ENCODE measurements at regions of chr4 and their contacts with region 1.

Region 1: DNA sequence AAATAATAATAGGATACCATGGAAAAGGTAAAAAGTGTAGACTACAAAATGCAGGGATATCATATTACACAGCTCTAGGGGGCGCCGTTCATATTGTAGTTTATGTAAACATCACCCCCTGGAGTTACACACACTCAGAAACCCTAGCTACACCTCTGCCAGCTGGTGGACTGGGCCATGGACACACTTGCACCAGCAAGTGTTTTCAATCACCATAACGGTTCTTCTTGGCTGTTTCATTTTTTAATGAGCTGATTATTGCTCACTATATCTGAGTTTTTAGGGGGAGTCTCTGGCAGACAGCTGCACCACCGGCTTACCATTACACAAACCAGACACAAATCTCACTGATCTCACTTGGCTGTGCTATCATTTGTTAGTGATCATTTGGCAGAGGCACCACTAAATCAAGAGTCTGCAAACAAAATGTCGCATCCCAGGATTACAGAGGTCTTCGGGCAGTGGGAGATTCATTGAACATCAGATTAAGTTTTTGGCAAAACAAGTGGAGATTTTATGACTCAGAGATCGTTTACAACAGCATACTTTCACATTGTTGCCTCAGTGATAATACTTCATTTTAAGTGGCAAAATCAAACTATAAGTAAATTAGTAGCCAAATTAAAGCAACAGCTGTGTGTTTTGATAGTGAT is 185.7 kb downstream of the UNC5C start:
- DNase-seq: peak in 1 of 10 donors; percentile 54
- H3K4me3 ChIP-seq: peak overlapping the region in 47 of 59 donors; percentile 0 to 58 (median 26)
- H3K27ac ChIP-seq: peak overlapping the region; percentile 29 to 90 (median 81)
- H3K27me3 ChIP-seq: no peaks in the 10 kb centered on the region
- CTCF ChIP-seq: peak in 49 of 56 donors; percentile 15 to 66 (median 43)

Region 2: DNA sequence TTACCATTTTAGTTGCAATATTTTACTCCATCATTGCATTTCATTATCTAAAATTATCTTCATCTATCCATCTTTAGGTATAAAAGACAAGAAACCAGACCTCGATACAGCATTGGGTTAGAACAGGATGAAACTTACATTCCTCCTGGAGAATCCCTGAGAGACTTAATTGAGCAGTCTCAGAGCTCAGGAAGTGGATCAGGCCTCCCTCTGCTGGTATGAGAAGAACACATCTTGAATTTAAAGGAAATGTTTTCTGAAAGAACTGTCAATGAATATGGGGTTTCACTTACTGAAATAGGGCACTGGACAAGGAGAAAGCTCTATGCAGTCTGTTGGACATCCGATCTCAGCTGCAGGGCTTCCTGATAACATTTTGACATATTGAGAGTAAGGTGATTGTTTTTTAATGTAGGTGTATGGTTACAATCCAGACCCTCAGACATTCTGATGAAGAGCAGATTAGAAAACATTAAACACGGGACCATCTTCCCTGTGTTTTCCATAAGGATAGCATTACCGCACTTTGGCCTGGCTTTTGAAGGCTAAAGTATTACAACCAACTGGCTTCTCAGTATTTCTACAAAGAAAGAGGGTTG is 238.0 kb before region 1 on chr4:
- intact Hi-C with region 1: no loop called
- DNase-seq: peak in 1 of 10 donors; percentile 42
- H3K4me3 ChIP-seq: no peak overlapping the region
- H3K27ac ChIP-seq: no peak overlapping the region
- H3K27me3 ChIP-seq: peaks cover 0 to 4% (median 0%) of the 10 kb centered on the region in 45 donors
- CTCF ChIP-seq: peak; percentile 20 to 76 (median 51)

Region 3: GRCh38 chr4:95295157-95295556 is 67.9 kb before region 1 on chr4:
- intact Hi-C with region 1: no loop called
- DNase-seq: no peak
- H3K4me3 ChIP-seq: no peak overlapping the region
- H3K27ac ChIP-seq: peak overlapping the region in 42 of 59 donors; percentile 7 to 91 (median 68)
- H3K27me3 ChIP-seq: no peaks in the 10 kb centered on the region
- CTCF ChIP-seq: no peak

Region 4: GRCh38 chr4:95528388-95528948 is 165.4 kb after region 1 on chr4:
- intact Hi-C with region 1: loop called in 1 of 2 experiments (anchors 5 kb)
- DNase-seq: no peak
- H3K4me3 ChIP-seq: no peak overlapping the region
- H3K27ac ChIP-seq: peak overlapping the region in 18 of 59 donors; percentile 0 to 99 (median 22)
- H3K27me3 ChIP-seq: no peaks in the 10 kb centered on the region
- CTCF ChIP-seq: no peak

Region 5: DNA sequence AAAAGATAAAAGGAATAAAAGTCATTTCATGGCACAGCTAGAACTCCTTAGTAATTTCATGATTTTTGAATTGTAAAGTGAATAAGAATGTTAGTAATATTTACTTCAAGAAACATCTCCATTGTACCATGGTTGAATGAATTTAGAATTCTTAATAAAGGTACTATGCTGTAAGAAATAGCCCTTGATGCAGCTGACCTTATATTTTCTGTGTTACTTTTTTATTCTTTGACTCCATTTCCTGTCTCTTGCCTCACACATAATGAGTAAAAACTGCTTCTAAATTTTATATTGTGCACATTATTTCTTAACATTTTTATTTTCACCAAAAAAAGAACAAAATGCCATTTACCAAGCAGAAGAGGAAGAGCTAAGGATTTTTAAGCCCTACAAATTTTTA is 395.0 kb after region 1 on chr4:
- intact Hi-C with region 1: no loop called
- DNase-seq: no peak
- H3K4me3 ChIP-seq: no peak overlapping the region
- H3K27ac ChIP-seq: no peak overlapping the region
- H3K27me3 ChIP-seq: no peaks in the 10 kb centered on the region
- CTCF ChIP-seq: no peak

Measured in dorsolateral prefrontal cortex (tissue), 120 donors.